ENCODE measurements at regions of chr15 and their contacts with region 1.

Region 1: GRCh38 chr15:45714590-45715488 is 80.0 kb downstream of the SQOR start:
- DNase-seq: peak; percentile 52
- ATAC-seq: peak; percentile 82 to 86

Region 2: DNA sequence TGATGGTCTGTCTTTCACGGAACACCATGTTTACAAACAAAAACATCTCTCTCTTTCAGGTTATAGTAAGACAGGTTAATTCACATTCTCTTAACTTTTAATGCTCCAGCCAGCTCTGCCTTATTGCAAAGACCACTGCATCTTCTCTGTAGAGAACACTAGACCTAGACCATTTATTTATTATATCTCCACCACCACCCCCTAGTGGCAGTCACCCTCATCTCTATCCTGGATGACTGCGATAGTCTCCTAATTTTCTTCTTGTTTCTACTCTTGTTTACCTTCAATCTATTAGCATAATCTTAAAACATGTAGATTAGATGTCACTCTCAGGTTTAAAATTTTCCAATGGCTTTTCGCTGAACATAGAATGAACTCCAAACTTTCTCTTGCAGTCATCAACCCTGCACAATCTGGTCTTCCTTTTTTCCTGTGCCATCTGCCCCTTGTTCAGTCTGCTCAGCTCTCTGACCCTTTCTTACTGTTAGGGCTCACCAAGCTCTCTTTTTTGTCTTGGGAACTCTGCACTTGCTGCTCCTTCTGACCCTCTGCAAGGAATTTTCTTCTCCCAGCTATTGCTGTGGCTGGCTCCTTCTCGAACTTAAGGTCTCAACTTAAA is 75.6 kb after region 1 on chr15:
- intact Hi-C with region 1: loop called (anchors 1 to 5 kb)
- DNase-seq: no peak
- ATAC-seq: peak; percentile 50 to 72

Region 3: DNA sequence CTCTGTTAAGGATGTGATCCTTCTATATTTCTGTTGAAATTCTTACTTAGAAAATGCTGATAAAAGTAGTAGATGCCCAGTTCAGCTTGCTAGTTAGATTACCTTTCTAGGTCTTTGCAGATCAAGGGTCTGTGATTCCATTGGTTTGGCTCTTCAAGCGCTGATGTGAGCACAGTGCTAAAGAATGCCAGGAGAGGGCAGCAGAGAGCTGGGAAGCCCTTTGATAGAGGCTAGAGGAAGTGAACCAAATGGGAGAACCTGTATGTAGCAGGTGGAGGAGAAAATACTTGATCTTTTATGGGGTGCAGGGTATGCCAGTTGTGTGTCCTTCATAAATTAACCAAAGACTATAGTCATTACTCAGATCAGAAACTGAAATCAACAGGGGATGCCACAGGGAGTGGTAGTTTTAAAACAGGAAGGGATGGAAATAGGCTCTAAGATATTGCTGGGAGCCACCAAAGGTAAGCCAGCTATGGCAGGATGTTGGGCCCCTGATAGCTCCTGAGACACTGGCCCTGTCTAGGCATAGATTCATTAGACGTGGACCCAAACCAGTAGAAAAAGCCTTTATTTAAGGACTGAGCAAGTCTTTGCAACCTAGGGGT is 597.4 kb after region 1 on chr15:
- intact Hi-C with region 1: loop called in 1 of 2 experiments (anchors 10 kb)
- DNase-seq: peak; percentile 70
- ATAC-seq: peak; percentile 84 to 88

Measured in left cardiac atrium (tissue), 4 donors.